Sigmoid colon (tissue), 7 donors: ENCODE measurements at regions of chr9 and their contacts with region 1.

Region 1: GRCh38 chr9:128688512-128689292 is at the start of gene SET:
- DNase-seq: peak; percentile 97
- H3K4me3 ChIP-seq: peak within 1 kb of the TSS; percentile 78 to 98 (median 94)
- H3K27ac ChIP-seq: peak within 1 kb of the TSS; percentile 95 to 100 (median 98)
- H3K4me1 ChIP-seq: peaks cover 0 to 40% (median 35%) of the 10 kb centered on the region in 4 donors
- H3K27me3 ChIP-seq: no peaks in the 10 kb centered on the region
- CTCF ChIP-seq: no peak
- EP300 ChIP-seq: no peak
- POLR2A ChIP-seq: no peak
- total RNA-seq, gene SET: 182 to 195 (median 187) TPM

Region 2: DNA sequence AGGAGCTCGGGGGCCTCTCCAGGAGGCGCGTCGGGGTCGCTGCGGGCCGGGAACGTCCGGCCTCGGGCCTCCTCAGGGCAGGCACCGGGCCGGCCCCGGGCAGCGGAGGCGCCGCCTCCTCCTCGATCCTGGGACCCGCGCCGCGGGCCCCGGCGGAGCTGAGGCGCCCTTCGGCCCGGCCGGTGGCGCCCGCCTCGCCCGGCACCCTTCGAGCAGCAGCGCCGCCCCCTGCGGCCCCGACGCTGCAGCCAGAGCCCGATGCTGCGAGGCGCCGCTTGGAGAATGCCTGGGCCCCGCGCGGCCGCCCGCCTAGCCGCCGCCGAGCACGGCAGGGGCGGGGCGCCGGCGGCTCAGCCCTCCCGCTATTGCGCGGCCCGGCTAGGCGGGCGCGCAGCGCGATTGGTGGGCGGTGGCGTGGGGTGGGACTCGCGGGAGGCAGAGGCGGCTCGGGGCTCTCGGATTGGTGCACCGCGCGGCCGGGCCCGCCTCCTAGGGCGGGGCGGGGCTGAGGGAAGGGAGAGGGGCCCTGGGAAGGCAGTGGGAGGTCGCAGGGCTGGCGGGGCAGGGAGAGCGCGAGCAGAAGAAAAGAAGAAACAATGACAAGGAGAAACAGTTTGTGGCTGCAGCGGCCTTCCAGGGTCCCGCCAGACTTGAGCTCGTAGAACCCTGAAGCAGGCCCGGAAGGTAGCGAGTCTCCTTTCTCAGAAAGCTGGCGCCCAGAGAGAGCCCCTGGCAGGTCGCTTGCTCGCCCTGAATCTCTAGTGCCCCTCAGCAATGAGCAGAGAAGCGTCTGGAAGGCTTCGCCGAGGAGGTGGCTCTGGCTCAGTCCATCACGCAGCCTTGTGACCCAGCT is 707.8 kb before region 1 on chr9 and contains the start of gene EEIG1:
- intact Hi-C with region 1: no loop called
- DNase-seq: peak; percentile 97
- H3K4me3 ChIP-seq: peak within 1 kb of the TSS; percentile 61 to 96 (median 83)
- H3K27ac ChIP-seq: peak within 1 kb of the TSS; percentile 94 to 99 (median 96)
- H3K4me1 ChIP-seq: peaks cover 0 to 52% (median 42%) of the 10 kb centered on the region in 4 donors
- H3K27me3 ChIP-seq: no peaks in the 10 kb centered on the region
- CTCF ChIP-seq: no peak
- EP300 ChIP-seq: peak in 1 of 4 donors; percentile 3
- POLR2A ChIP-seq: peak; percentile 48 to 84
- total RNA-seq, gene EEIG1: 10.9 to 32.7 (median 19.2) TPM

Region 3: DNA sequence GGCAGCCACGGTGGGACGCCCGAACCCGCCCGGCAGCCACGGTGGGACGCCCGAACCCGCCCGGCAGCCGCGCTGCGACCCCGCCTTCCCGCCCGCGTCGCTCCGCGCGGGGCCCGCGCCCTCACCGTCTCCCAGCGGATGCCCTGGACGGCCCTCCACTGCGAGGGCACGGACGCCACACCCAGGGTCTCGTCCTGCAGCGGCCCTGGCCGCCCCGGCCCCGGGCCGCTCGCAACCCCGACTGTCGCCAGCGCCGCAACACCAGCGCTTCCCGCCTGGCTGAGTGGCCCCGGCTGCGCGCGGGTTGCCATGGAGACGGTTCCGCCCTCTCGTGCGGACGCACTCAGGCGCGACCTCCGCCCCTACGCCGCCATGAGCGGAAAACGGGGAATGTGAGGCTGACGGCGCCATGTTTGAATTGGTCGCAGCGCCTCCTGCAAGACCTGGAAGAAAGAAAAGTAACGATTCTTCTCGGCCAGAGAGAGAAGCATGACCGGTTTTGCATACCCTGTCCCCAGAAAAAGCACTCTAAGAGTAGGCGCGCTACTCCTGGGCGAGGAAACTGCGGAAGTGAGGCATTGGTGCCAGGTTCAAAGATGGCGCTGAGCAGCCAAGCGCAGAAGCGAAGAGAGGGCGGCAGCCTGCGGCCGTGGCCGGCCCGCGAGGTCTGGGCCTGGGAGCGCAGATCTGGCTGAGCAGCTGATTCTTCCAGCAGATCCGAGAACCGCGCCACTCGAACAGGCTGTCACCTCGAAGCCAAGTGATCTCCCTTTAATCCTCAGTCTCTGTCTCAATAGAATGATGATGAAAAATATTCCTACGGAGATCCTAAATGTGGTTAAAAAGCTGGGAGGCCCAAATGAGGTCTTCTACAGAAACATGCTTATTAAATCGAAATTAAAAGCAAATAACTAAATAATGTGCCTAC is 32.0 kb before region 1 on chr9 and contains the start of gene DYNC2I2:
- intact Hi-C with region 1: loop called (anchors 2 kb)
- DNase-seq: peak; percentile 98
- H3K4me3 ChIP-seq: peak within 1 kb of the TSS; percentile 54 to 93 (median 72)
- H3K27ac ChIP-seq: peak within 1 kb of the TSS; percentile 88 to 95 (median 92)
- H3K4me1 ChIP-seq: peaks cover 0 to 12% (median 7%) of the 10 kb centered on the region in 4 donors
- H3K27me3 ChIP-seq: no peaks in the 10 kb centered on the region
- CTCF ChIP-seq: no peak
- EP300 ChIP-seq: no peak
- POLR2A ChIP-seq: peak; percentile 19 to 36
- total RNA-seq, gene DYNC2I2: 21.6 to 33.0 (median 27.0) TPM

Region 4: DNA sequence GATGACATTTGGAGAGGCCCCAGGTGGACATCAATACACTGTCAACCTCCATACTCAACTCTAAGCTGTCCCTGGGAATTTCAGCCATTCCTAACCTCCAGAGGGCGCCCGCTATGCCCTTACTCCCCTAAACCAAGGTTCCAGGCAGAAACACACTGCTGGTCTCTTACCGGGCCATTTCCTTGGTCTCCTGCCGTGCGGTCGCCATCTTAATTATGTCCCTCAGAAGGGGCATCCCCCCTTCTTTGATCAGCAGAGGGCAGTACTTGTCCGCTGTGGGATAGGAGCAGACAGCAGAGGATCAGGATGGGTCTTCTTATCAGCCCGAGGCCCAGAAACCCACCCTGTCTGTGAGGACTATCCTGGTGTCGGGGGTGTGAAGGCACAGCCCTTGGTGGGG is 44.6 kb after region 1 on chr9:
- intact Hi-C with region 1: no loop called
- DNase-seq: peak; percentile 75
- H3K4me3 ChIP-seq: no peak overlapping the region
- H3K27ac ChIP-seq: peak overlapping the region in 3 of 4 donors; percentile 33 to 62 (median 48)
- H3K4me1 ChIP-seq: no peaks in the 10 kb centered on the region
- H3K27me3 ChIP-seq: no peaks in the 10 kb centered on the region
- CTCF ChIP-seq: peak; percentile 26 to 60 (median 45)
- EP300 ChIP-seq: no peak
- POLR2A ChIP-seq: no peak

Region 5: GRCh38 chr9:129524582-129525270 is 836.0 kb after region 1 on chr9:
- intact Hi-C with region 1: no loop called
- DNase-seq: peak; percentile 46
- H3K4me3 ChIP-seq: no peak overlapping the region
- H3K27ac ChIP-seq: no peak overlapping the region
- H3K4me1 ChIP-seq: no peaks in the 10 kb centered on the region
- H3K27me3 ChIP-seq: no peaks in the 10 kb centered on the region
- CTCF ChIP-seq: no peak
- EP300 ChIP-seq: no peak
- POLR2A ChIP-seq: no peak